CD4-positive, alpha-beta memory T cell (primary cell): ENCODE measurements at regions of chr5 and their contacts with region 1.

Region 1: DNA sequence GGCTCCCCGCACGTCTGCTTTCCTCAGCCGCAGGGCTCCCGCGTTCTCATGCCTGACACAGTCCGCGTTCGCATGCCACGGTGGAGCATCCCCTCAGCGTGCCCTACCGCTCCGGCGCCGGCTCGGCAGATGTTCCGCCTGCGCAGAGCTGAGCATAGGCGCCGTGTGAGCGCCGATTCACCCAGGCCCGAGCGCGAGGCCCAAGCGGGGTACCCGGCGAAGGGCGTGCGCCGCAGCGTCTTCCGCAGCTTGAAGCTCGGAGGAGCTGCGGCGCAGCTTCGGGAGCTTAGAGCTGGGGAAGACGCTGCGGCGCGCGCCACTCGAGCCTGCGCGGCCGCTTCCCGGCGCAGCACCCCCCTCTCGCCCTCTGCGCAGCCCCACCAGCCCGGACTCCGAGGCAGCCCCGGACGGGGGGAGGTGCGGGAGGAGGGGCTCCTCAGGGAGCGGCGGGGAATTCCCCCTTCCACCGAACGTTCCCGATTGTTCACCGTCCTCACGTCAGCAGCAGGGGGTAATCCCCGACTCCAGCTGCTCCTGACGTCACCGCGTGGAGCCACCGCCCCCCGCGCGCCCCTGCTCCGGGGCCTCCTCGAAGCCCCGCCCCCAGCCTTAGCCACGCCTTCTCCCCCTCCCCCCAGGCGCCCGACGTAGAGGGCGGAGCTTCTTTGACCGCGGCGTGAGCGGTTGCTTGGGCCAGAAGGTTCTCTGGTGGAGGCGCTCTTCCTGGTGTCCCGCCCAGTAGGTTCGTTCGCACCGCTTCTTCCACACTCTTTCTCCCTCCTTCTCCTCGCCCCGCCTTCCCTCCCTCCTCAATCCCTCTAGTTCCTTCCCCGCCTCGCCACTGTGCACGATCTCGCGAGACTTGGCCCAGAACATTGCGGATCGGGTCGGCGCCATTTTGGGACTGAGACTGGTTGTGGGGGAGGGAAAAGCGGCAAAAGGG is at the start of gene GPBP1:
- DNase-seq: peak; percentile 98 to 99 (median 99)
- H3K4me3 ChIP-seq: peak within 1 kb of the TSS; percentile 70 to 87
- H3K4me3 Mint-ChIP-seq: peak within 1 kb of the TSS; percentile 96 to 99 (median 98)
- H3K27ac ChIP-seq: peak within 1 kb of the TSS; percentile 99
- H3K27ac Mint-ChIP-seq: peak within 1 kb of the TSS; percentile 98 to 100 (median 99)
- H3K4me1 ChIP-seq: peaks cover 37% of the 10 kb centered on the region
- H3K4me1 Mint-ChIP-seq: peaks cover 14 to 53% (median 25%) of the 10 kb centered on the region in 4 donors
- H3K27me3 ChIP-seq: no peaks in the 10 kb centered on the region
- H3K27me3 Mint-ChIP-seq: no peaks in the 10 kb centered on the region
- total RNA-seq, gene GPBP1: 136 to 137 TPM

Region 2: GRCh38 chr5:55307383-55308253 is 1865.8 kb before region 1 on chr5 and contains the starts of genes DHX29 and MTREX:
- CTCF ChIA-PET with region 1: no interaction called
- POLR2A ChIA-PET with region 1: interaction called, 4 read pairs
- intact Hi-C with region 1: loop called (anchors 5 kb)
- DNase-seq: peak; percentile 89 to 93 (median 91)
- H3K4me3 ChIP-seq: peak within 1 kb of the TSS; percentile 86 to 94
- H3K4me3 Mint-ChIP-seq: no peak within 1 kb of the TSS
- H3K27ac ChIP-seq: peak within 1 kb of the TSS; percentile 94
- H3K27ac Mint-ChIP-seq: no peak within 1 kb of the TSS
- H3K4me1 ChIP-seq: peaks cover 66% of the 10 kb centered on the region
- H3K4me1 Mint-ChIP-seq: peaks cover 21 to 35% (median 25%) of the 10 kb centered on the region in 4 donors
- H3K27me3 ChIP-seq: no peaks in the 10 kb centered on the region
- H3K27me3 Mint-ChIP-seq: no peaks in the 10 kb centered on the region
- total RNA-seq, gene DHX29: 18.5 to 22.5 TPM
- total RNA-seq, gene MTREX: 73.3 to 82.2 TPM

Region 3: DNA sequence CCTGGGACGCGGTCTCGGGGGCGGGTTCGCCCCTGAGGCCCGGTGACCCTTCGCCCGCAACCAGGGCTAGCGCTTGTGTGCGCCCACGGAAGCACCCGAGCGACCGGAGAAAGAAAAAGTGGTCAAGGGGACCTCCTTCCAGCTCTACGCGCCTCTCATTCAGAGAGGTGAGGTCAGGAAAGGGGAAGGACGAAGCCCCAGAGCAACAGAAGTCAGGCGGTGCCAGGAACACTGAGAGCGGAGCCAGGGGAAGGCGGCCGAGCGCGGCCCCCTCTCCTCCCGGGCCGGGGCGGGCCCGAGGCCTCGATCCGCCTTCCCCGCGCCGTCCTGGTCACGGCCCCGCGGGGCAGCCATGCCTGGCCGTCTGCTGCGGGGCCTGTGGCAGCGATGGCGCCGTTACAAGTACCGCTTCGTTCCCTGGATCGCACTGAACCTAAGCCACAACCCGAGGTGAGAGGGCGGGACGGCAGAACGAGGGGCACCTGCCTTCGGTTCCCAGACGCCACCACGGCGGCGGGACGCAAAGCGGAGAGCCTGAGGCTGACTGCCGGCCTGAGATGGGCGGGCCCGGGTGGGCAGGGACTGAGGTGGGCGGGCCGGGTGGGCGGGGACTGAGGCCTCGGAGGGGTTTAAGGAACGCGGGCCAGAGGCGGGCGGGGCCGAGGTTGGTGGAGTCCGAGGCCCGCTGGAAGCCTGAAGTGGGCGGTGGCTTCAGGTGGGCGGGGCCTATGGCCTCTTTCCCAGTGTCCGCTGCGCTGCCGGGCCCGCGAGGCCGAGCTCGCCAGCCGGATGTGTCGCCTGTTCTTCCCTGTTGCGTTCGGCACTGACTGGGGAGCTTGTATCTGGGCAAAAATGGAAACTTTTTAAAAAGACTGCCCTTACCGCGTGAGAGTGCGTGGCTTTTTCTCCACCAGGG is 263.9 kb before region 1 on chr5 and contains the start of gene SETD9:
- CTCF ChIA-PET with region 1: no interaction called
- POLR2A ChIA-PET with region 1: interaction called, 20 read pairs
- intact Hi-C with region 1: loop called (anchors 1 kb)
- DNase-seq: peak; percentile 76 to 83 (median 81)
- H3K4me3 ChIP-seq: peak within 1 kb of the TSS; percentile 88 to 97
- H3K4me3 Mint-ChIP-seq: peak within 1 kb of the TSS; percentile 89 to 98 (median 92)
- H3K27ac ChIP-seq: peak within 1 kb of the TSS; percentile 62
- H3K27ac Mint-ChIP-seq: peak within 1 kb of the TSS; percentile 65 to 95 (median 92)
- H3K4me1 ChIP-seq: peaks cover 15% of the 10 kb centered on the region
- H3K4me1 Mint-ChIP-seq: peaks cover 15 to 25% (median 17%) of the 10 kb centered on the region in 4 donors
- H3K27me3 ChIP-seq: no peaks in the 10 kb centered on the region
- H3K27me3 Mint-ChIP-seq: no peaks in the 10 kb centered on the region
- total RNA-seq, gene SETD9: 3.8 to 6.8 TPM

Region 4: GRCh38 chr5:56951946-56952691 is 221.3 kb before region 1 on chr5 and contains the start of gene MIER3:
- CTCF ChIA-PET with region 1: no interaction called
- POLR2A ChIA-PET with region 1: interaction called, 12 read pairs
- intact Hi-C with region 1: loop called (anchors 1 kb)
- DNase-seq: peak; percentile 79 to 83 (median 80)
- H3K4me3 ChIP-seq: peak within 1 kb of the TSS; percentile 57 to 72
- H3K4me3 Mint-ChIP-seq: peak within 1 kb of the TSS; percentile 94 to 98 (median 96)
- H3K27ac ChIP-seq: peak within 1 kb of the TSS; percentile 53
- H3K27ac Mint-ChIP-seq: peak within 1 kb of the TSS; percentile 92 to 96 (median 95)
- H3K4me1 ChIP-seq: peaks cover 16% of the 10 kb centered on the region
- H3K4me1 Mint-ChIP-seq: peaks cover 14 to 25% (median 20%) of the 10 kb centered on the region in 4 donors
- H3K27me3 ChIP-seq: peaks cover 5% of the 10 kb centered on the region
- H3K27me3 Mint-ChIP-seq: peaks cover 6 to 12% of the 10 kb centered on the region in 2 donors
- total RNA-seq, gene MIER3: 27.8 to 32.8 TPM

Region 5: DNA sequence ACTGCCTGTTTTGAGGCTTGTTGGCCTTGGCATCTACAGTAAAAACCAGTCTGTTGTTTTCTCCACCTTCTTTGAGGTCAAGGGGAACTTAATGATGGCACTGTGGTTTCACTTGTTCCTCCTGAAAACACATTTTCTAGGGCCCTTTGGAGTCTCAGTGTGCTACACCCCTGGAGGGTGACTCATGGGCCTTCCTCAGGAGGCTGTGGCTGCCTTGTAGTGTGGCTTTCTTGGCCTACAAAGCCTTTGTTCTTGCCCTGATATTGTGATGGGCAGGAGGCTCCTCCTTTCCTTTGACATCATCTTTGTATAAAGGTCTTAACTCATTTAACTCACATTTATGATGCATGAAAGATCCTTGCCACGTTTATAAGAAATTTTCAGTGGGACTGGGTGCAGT is 55.9 kb before region 1 on chr5:
- CTCF ChIA-PET with region 1: no interaction called
- POLR2A ChIA-PET with region 1: no interaction called
- intact Hi-C with region 1: loop called (anchors 1 kb)
- DNase-seq: peak; percentile 71 to 89 (median 82)
- H3K4me3 ChIP-seq: no peak overlapping the region
- H3K4me3 Mint-ChIP-seq: peak overlapping the region in 7 of 8 donors; percentile 3 to 68 (median 51)
- H3K27ac ChIP-seq: peak overlapping the region; percentile 23
- H3K27ac Mint-ChIP-seq: peak overlapping the region; percentile 83 to 98 (median 94)
- H3K4me1 ChIP-seq: peaks cover 20% of the 10 kb centered on the region
- H3K4me1 Mint-ChIP-seq: peaks cover 8 to 21% (median 16%) of the 10 kb centered on the region in 4 donors
- H3K27me3 ChIP-seq: no peaks in the 10 kb centered on the region
- H3K27me3 Mint-ChIP-seq: no peaks in the 10 kb centered on the region

Region 6: GRCh38 chr5:57128325-57128724 is 45.1 kb before region 1 on chr5:
- CTCF ChIA-PET with region 1: no interaction called
- POLR2A ChIA-PET with region 1: no interaction called
- intact Hi-C with region 1: no loop called
- DNase-seq: no peak
- H3K4me3 ChIP-seq: no peak overlapping the region
- H3K4me3 Mint-ChIP-seq: no peak overlapping the region
- H3K27ac ChIP-seq: no peak overlapping the region
- H3K27ac Mint-ChIP-seq: no peak overlapping the region
- H3K4me1 ChIP-seq: no peaks in the 10 kb centered on the region
- H3K4me1 Mint-ChIP-seq: no peaks in the 10 kb centered on the region
- H3K27me3 ChIP-seq: no peaks in the 10 kb centered on the region
- H3K27me3 Mint-ChIP-seq: no peaks in the 10 kb centered on the region

Region 7: GRCh38 chr5:57184322-57184721 is 10.9 kb after region 1 on chr5:
- CTCF ChIA-PET with region 1: no interaction called
- POLR2A ChIA-PET with region 1: interaction called, 11 read pairs
- intact Hi-C with region 1: loop called (anchors 1 kb)
- DNase-seq: no peak
- H3K4me3 ChIP-seq: no peak overlapping the region
- H3K4me3 Mint-ChIP-seq: peak overlapping the region in 7 of 8 donors; percentile 25 to 79 (median 70)
- H3K27ac ChIP-seq: no peak overlapping the region
- H3K27ac Mint-ChIP-seq: peak overlapping the region in 3 of 7 donors; percentile 20 to 42 (median 22)
- H3K4me1 ChIP-seq: peaks cover 99% of the 10 kb centered on the region
- H3K4me1 Mint-ChIP-seq: peaks cover 56 to 90% (median 72%) of the 10 kb centered on the region in 4 donors
- H3K27me3 ChIP-seq: no peaks in the 10 kb centered on the region
- H3K27me3 Mint-ChIP-seq: no peaks in the 10 kb centered on the region